SK-N-SH (cell line): ENCODE measurements at regions of chr15 and their contacts with region 1.

Region 1: DNA sequence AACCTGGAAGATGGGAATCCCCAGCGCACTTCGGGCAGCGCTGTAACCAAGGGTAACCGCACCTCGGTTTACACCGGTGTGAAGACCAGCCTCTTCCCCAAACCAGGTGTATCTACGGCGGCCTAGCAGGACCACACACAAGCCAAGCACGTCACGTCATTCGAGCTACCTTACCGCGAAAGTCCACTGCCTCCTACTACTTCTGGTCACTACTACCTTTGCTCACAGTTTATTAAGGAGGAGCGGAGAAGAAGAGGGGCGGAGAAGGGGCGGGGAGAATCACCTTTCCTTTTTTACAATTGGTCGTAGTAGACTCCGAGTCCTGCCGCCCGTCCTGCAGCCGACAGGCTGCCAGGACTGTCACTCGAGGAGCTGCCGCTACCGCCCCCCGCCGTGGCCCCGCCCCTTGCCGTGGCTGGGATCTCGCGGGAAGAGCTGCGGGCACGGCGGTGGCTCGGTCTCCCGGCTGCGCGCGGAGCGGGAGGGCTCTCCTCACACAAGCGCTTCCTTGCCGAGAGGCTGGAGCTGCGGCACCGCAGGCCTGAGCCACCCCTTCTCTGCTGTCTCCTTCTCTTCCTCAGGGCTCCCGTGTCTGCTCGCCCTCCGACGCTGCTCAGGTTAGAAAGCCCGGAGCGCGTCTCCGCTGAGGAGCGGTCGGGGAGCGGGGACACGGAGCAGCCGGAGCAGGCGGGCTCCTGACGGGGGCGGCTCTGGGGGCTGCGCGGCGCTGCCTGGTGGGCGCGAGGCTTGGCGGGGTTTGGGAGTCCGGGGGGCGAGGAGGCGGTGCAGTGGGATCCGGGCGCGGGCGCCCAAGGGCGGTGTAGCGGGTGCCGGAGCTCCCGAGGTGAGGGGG is at the start of gene GLCE:
- DNase-seq: peak; percentile 98
- H3K4me3 ChIP-seq: peak within 1 kb of the TSS; percentile 82 to 94
- H3K27ac ChIP-seq: peak within 1 kb of the TSS; percentile 71 to 92
- H3K4me1 ChIP-seq: peaks cover 7 to 20% of the 10 kb centered on the region in 2 experiments
- H3K27me3 ChIP-seq: no peaks in the 10 kb centered on the region
- CTCF ChIP-seq: no peak
- EP300 ChIP-seq: no peak
- RAD21 ChIP-seq: 0 out of 2 replicates have a peak, but pooled peaks have one; percentile 5
- polyA plus RNA-seq, gene GLCE: 19.5 and 25.0 TPM in 2 replicates

Region 2: GRCh38 chr15:69225355-69226025 is 65.1 kb after region 1 on chr15:
- CTCF ChIA-PET with region 1: interaction called, 10 read pairs
- POLR2A ChIA-PET with region 1: interaction called, 3 read pairs
- DNase-seq: peak; percentile 36
- H3K4me3 ChIP-seq: no peak overlapping the region
- H3K27ac ChIP-seq: no peak overlapping the region
- H3K4me1 ChIP-seq: peaks cover 3% of the 10 kb centered on the region in 2 experiments; a peak in 2 of 4 replicates
- H3K27me3 ChIP-seq: no peaks in the 10 kb centered on the region
- CTCF ChIP-seq: peak; percentile 59
- EP300 ChIP-seq: no peak
- RAD21 ChIP-seq: peak; percentile 77